Activated CD8-positive, alpha-beta T cell treated with anti-CD3 and anti-CD28 coated beads, Interleukin-2, amount 10 ng/mL, durations not matched to agents 7 days and 5 days (primary cell): ENCODE measurements at regions of chr3 and their contacts with region 1.

Region 1: GRCh38 chr3:138434276-138434874 is at the start of gene ESYT3:
- DNase-seq: peak; percentile 78
- ATAC-seq: peak; percentile 99
- H3K4me3 Mint-ChIP-seq: peak within 1 kb of the TSS; percentile 73
- H3K27ac Mint-ChIP-seq: no peak within 1 kb of the TSS
- H3K4me1 Mint-ChIP-seq: peaks cover 13% of the 10 kb centered on the region
- H3K27me3 Mint-ChIP-seq: peaks cover 52% of the 10 kb centered on the region
- total RNA-seq, gene ESYT3: 0.16 to 0.18 TPM

Region 2: DNA sequence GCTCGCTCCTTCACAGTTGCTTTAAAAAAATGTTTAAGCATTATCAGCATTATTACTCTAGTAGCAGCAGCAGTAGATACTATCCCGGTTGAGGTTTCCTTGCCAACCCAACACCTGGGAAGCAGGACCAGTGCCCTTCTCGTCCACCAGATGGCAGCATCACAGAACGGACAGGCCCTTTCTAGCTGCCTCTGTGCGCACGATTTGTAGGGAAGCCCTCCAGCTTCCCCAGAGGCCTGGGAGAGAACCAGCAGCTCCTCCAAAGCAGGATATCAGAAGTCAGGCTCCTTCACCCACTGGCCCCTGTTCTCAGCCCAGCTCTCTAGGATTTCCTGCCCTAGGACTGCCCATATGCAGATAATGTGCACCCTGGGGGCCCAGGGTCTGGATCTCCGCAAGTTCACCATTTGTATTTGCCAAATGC is 16.8 kb before region 1 on chr3:
- CTCF ChIA-PET with region 1: interaction called, 14 read pairs
- POLR2A ChIA-PET with region 1: interaction called, 3 read pairs
- DNase-seq: peak; percentile 73
- ATAC-seq: peak; percentile 96
- H3K4me3 Mint-ChIP-seq: no peak overlapping the region
- H3K27ac Mint-ChIP-seq: no peak overlapping the region
- H3K4me1 Mint-ChIP-seq: peaks cover 2% of the 10 kb centered on the region
- H3K27me3 Mint-ChIP-seq: peaks cover 7% of the 10 kb centered on the region